PC-9 (cell line): ENCODE measurements at regions of chr5 and their contacts with region 1.

Region 1: GRCh38 chr5:5387192-5387591 is 35.3 kb upstream of the ICE1 start:
- DNase-seq: no peak
- H3K4me3 ChIP-seq: no peak overlapping the region
- H3K27ac ChIP-seq: no peak overlapping the region
- H3K4me1 ChIP-seq: peaks cover 8% of the 10 kb centered on the region
- H3K27me3 ChIP-seq: 0 out of 2 replicates have a peak, but pooled peaks cover 11% of the 10 kb centered on the region
- CTCF ChIP-seq: no peak

Region 2: GRCh38 chr5:5351288-5352089 is 35.7 kb before region 1 on chr5:
- CTCF ChIA-PET with region 1: no interaction called
- POLR2A ChIA-PET with region 1: no interaction called
- intact Hi-C with region 1: loop called (anchors 5 kb)
- DNase-seq: peak; percentile 52 to 81
- H3K4me3 ChIP-seq: no peak overlapping the region
- H3K27ac ChIP-seq: peak overlapping the region; percentile 50
- H3K4me1 ChIP-seq: peaks cover 27% of the 10 kb centered on the region
- H3K27me3 ChIP-seq: no peaks in the 10 kb centered on the region
- CTCF ChIP-seq: no peak